Activated naive CD4-positive, alpha-beta T cell treated with anti-CD3 and anti-CD28 coated beads for 36 hours (primary cell): ENCODE measurements at regions of chr22 and their contacts with region 1.

Region 1: GRCh38 chr22:20624161-20624616 is 116.8 kb downstream of the MED15 start:
- DNase-seq: peak; percentile 86
- H3K4me3 Mint-ChIP-seq: no peak overlapping the region
- H3K27ac Mint-ChIP-seq: no peak overlapping the region
- H3K4me1 Mint-ChIP-seq: peaks cover 13% of the 10 kb centered on the region
- H3K27me3 Mint-ChIP-seq: no peaks in the 10 kb centered on the region

Region 2: GRCh38 chr22:20606041-20606783 is 18.0 kb before region 1 on chr22:
- CTCF ChIA-PET with region 1: interaction called, 7 read pairs
- intact Hi-C with region 1: loop called (anchors 1 kb)
- DNase-seq: peak; percentile 81
- H3K4me3 Mint-ChIP-seq: no peak overlapping the region
- H3K27ac Mint-ChIP-seq: no peak overlapping the region
- H3K4me1 Mint-ChIP-seq: peaks cover 11% of the 10 kb centered on the region
- H3K27me3 Mint-ChIP-seq: no peaks in the 10 kb centered on the region